ENCODE measurements at regions of chr17 and their contacts with region 1.

Region 1: DNA sequence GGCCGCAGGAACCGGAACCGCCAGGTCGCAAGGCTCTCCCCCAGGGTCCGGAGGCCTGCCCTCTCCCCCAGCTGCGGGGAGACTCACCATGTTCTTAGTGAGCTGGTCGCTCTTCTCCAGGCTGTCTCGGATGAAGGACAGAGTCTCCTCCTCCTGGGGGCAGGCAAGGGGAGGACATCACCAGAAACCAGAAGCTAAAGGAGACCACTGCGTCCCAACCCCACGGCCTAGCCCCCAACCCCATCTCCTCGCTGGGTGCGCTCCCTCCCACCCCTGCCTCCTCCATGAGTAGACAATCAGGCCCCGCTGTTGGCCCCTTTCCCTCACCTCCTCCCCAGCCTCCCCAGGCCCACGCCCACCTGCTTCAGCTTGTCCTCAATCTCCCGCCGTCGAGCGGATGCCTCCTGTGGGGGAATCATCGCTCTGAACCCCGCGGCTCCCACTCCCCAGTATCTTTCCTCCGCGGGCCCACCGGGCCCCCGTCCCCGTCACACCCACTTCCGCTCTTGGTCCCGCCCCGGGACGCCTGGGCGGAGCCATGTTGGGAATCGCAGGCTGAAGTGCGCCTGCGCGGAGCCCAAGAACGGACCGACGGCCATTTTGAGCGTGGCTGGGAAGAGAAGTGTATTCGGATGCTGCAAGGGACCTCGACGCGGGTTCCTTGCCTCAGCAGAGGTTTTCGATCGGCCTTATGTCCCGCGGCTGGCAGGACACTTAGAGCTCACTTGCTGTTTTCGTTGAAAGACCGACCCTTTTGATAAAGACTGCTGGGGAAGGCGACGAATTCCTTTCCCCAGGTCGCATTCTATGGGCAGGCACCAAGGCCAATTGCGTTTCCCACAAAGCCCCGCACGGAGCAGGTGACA is at the start of gene EXOC7:
- DNase-seq: peak; percentile 94
- ATAC-seq: peak; percentile 95
- H3K4me3 Mint-ChIP-seq: peak within 1 kb of the TSS; percentile 93
- H3K27ac Mint-ChIP-seq: peak within 1 kb of the TSS; percentile 97
- H3K4me1 Mint-ChIP-seq: peaks cover 25% of the 10 kb centered on the region
- H3K27me3 Mint-ChIP-seq: no peaks in the 10 kb centered on the region
- CTCF ChIP-seq: no peak
- total RNA-seq, gene EXOC7: 53.5 to 64.9 TPM

Region 2: GRCh38 chr17:76079956-76080767 is 23.3 kb before region 1 on chr17:
- CTCF ChIA-PET with region 1: interaction called, 4 read pairs
- POLR2A ChIA-PET with region 1: interaction called, 10 read pairs
- intact Hi-C with region 1: no loop called
- DNase-seq: peak; percentile 27
- ATAC-seq: peak; percentile 17
- H3K4me3 Mint-ChIP-seq: no peak overlapping the region
- H3K27ac Mint-ChIP-seq: no peak overlapping the region
- H3K4me1 Mint-ChIP-seq: peaks cover 37% of the 10 kb centered on the region
- H3K27me3 Mint-ChIP-seq: peaks cover 37% of the 10 kb centered on the region
- CTCF ChIP-seq: no peak

Region 3: GRCh38 chr17:76121932-76122430 is 18.5 kb after region 1 on chr17:
- CTCF ChIA-PET with region 1: interaction called, 4 read pairs
- POLR2A ChIA-PET with region 1: interaction called, 15 read pairs
- intact Hi-C with region 1: no loop called
- DNase-seq: peak; percentile 40
- ATAC-seq: peak; percentile 10
- H3K4me3 Mint-ChIP-seq: peak overlapping the region; percentile 45
- H3K27ac Mint-ChIP-seq: peak overlapping the region; percentile 77
- H3K4me1 Mint-ChIP-seq: peaks cover 20% of the 10 kb centered on the region
- H3K27me3 Mint-ChIP-seq: no peaks in the 10 kb centered on the region
- CTCF ChIP-seq: no peak

Region 4: DNA sequence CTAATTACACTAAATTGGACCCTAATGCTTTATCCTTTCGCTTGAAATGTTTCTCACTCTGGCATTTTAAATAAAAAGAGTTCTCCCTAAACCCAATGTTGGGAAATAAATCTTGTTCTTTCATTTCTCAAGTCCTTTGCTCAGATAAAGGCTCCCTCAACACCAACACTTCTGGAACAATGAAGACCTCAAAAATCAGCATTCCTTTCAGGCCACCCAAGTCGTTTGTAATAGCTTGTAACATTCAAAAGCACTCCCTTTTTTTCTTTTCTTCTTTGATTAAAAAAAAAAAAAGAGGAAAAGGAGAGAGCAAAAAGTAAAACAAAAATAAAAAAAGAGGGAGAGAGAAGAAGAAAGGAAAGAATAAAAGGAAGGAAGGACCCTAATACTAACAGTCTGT is 60.8 kb after region 1 on chr17:
- CTCF ChIA-PET with region 1: no interaction called
- POLR2A ChIA-PET with region 1: no interaction called
- intact Hi-C with region 1: no loop called
- DNase-seq: no peak
- ATAC-seq: no peak
- H3K4me3 Mint-ChIP-seq: no peak overlapping the region
- H3K27ac Mint-ChIP-seq: no peak overlapping the region
- H3K4me1 Mint-ChIP-seq: peaks cover 13% of the 10 kb centered on the region
- H3K27me3 Mint-ChIP-seq: no peaks in the 10 kb centered on the region
- CTCF ChIP-seq: no peak

Region 5: DNA sequence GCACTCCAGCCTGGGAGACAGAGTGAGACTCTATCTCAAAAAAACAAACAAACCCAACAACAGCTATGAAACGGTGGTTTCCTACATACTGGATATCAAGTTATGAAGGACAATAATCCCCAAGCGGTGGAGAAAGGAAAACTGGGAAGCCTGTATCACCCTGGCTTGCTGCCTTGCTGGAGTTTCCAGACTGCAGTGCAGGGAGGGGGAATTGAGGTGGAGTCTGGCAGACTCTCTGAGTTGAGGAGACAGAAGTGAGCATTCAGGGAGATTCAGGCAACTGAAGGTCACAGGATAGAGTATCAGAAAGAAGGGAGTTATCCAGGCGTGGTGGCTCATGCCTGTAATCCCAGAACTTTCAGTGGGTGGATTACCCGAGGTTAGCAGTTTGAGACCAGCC is 192.7 kb after region 1 on chr17:
- CTCF ChIA-PET with region 1: interaction called, 17 read pairs
- POLR2A ChIA-PET with region 1: interaction called, 3 read pairs
- intact Hi-C with region 1: no loop called
- DNase-seq: no peak
- ATAC-seq: no peak
- H3K4me3 Mint-ChIP-seq: no peak overlapping the region
- H3K27ac Mint-ChIP-seq: no peak overlapping the region
- H3K4me1 Mint-ChIP-seq: no peaks in the 10 kb centered on the region
- H3K27me3 Mint-ChIP-seq: no peaks in the 10 kb centered on the region
- CTCF ChIP-seq: no peak

Measured in activated CD8-positive, alpha-beta T cell treated with anti-CD3 and anti-CD28 coated beads for 36 hours (primary cell).